ENCODE measurements at regions of chr16 and their contacts with region 1.

Region 1: GRCh38 chr16:3690470-3690928 is 26.8 kb downstream of the TRAP1 start:
- DNase-seq: peak; percentile 72
- H3K4me3 ChIP-seq: peak overlapping the region; percentile 51
- CTCF ChIP-seq: peak; percentile 96

Region 2: GRCh38 chr16:3674513-3675295 is 15.8 kb before region 1 on chr16:
- CTCF ChIA-PET with region 1: interaction called, 11 read pairs
- POLR2A ChIA-PET with region 1: no interaction called
- DNase-seq: no peak
- H3K4me3 ChIP-seq: no peak overlapping the region
- CTCF ChIP-seq: no peak

Region 3: GRCh38 chr16:3717235-3718018 is 26.9 kb after region 1 on chr16 and contains the start of gene TRAP1:
- CTCF ChIA-PET with region 1: interaction called, 34 read pairs
- POLR2A ChIA-PET with region 1: no interaction called
- DNase-seq: no peak
- H3K4me3 ChIP-seq: peak within 1 kb of the TSS; percentile 94
- CTCF ChIP-seq: no peak

Region 4: GRCh38 chr16:3879887-3880564 is 189.5 kb after region 1 on chr16:
- CTCF ChIA-PET with region 1: interaction called, 19 read pairs
- POLR2A ChIA-PET with region 1: no interaction called
- DNase-seq: no peak
- H3K4me3 ChIP-seq: peak overlapping the region; percentile 74
- CTCF ChIP-seq: peak; percentile 11